Pancreas (tissue), 10 donors: ENCODE measurements at regions of chr16 and their contacts with region 1.

Region 1: GRCh38 chr16:69754469-69755310 is at the start of gene NOB1:
- DNase-seq: peak; percentile 95 to 100 (median 98)
- ATAC-seq: peak; percentile 98 to 99 (median 98)
- H3K4me3 ChIP-seq: peak within 1 kb of the TSS; percentile 71 to 89 (median 72)
- H3K27ac ChIP-seq: peak within 1 kb of the TSS; percentile 34 to 72 (median 42)
- H3K4me1 ChIP-seq: peaks cover 0 to 5% (median 0%) of the 10 kb centered on the region in 3 donors
- H3K27me3 ChIP-seq: no peaks in the 10 kb centered on the region
- CTCF ChIP-seq: peak; percentile 91 to 97 (median 95)
- total RNA-seq, gene NOB1: 34.8 to 123 (median 64.7) TPM

Region 2: DNA sequence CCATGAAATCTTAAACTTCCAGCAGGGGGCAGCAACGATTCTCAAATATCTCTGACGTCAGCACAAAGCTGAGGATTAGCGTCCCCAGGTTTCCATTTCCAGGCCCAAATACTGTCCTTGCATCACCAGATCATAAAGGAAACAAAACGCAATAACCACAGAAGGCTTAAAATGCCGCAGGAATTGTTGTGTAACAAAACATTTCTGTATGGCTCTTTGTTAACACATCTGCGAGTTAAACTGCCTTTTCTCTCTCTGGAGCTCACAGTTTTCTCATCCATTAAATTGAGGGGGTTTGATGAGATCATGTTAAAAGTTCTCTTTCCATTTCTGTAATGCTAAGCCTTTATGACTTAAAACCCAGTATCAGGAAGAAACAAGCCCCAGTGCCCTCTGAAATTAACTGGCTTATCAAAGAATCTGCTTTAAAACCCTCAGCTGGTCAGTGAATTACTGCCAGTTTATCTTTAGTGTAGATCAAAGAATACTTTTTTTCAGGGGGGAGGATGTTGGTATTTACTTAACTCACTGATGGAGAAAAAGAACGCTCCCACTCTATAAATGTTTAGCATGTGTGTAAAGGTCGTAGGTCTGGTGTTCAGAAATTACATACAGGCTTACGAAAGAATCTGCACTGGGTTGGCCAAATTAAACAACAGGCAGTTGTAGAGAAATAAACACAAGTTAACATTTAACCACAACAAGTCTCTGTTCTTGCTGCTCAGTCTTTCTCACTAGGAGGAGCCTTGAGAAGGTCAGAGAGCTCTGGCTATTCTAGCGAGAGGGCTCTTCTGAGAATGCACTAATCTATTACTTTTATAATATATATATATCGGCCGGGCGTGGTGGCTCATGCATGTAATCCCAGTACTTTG is 358.3 kb before region 1 on chr16:
- intact Hi-C with region 1: loop called in 2 of 3 experiments (anchors 10 kb)
- DNase-seq: peak in 4 of 6 donors; percentile 57 to 82 (median 75)
- ATAC-seq: peak; percentile 78 to 88 (median 84)
- H3K4me3 ChIP-seq: peak overlapping the region in 2 of 4 donors; percentile 11 to 21
- H3K27ac ChIP-seq: peak overlapping the region; percentile 76 to 91 (median 84)
- H3K4me1 ChIP-seq: peaks cover 17 to 31% (median 19%) of the 10 kb centered on the region in 3 donors
- H3K27me3 ChIP-seq: no peaks in the 10 kb centered on the region
- CTCF ChIP-seq: peak in 3 of 4 donors; percentile 47 to 61 (median 49)

Region 3: DNA sequence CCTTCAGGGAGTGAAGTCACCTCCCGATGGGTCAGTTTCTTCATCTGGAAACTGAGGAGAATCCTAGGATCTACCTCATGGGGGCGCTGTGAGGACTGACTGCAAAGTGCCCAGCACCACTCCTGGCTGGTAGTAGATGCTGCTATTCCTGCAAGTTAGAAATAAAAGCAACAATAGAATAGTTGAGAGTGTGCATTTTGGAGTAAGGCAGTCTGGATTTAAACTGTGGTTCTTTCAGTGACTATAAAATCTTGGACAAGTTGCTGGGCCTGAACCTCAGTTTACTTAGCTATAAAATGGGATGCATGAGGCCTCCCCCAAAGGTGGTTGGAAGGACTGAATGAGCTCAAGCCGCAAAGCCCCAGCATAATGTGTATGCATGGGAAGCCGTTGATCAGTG is 259.7 kb before region 1 on chr16:
- intact Hi-C with region 1: no loop called
- DNase-seq: no peak
- ATAC-seq: peak in 1 of 4 donors; percentile 42
- H3K4me3 ChIP-seq: no peak overlapping the region
- H3K27ac ChIP-seq: no peak overlapping the region
- H3K4me1 ChIP-seq: no peaks in the 10 kb centered on the region
- H3K27me3 ChIP-seq: no peaks in the 10 kb centered on the region
- CTCF ChIP-seq: no peak

Region 4: DNA sequence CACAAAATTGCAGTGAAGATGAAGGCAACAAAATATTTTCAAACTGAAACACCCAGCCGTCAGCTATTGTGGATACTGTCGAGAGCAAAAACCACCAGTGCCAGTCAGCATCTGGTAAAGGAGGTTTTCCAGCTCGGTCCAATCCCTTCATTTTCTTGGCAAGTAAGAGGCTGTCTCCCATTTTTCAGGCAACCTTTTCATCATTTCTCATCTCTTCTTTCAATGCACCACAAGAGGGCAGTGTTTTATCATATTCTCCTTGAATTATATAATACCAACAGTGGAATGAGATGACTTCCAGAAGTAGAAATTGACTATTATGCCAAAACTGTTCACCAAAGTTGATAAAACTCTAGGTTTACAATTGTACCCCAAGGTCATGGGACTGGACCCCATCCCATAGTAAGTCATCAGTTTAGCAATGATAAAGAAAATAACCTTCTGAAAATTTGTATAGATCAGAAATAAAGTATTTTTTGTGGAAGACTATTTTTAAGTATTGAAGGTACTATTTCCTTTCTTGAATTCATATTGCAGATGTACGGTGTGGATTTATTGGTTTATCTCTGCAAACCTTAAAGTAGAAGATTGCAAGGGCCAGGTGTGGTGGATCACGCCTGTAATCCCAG is 45.1 kb before region 1 on chr16:
- intact Hi-C with region 1: loop called in 1 of 3 experiments (anchors 10 kb)
- DNase-seq: no peak
- ATAC-seq: peak; percentile 44 to 68 (median 64)
- H3K4me3 ChIP-seq: no peak overlapping the region
- H3K27ac ChIP-seq: no peak overlapping the region
- H3K4me1 ChIP-seq: peaks cover 11 to 26% (median 15%) of the 10 kb centered on the region in 3 donors
- H3K27me3 ChIP-seq: no peaks in the 10 kb centered on the region
- CTCF ChIP-seq: peak; percentile 45 to 61 (median 56)